Activated naive CD4-positive, alpha-beta T cell treated with anti-CD3 and anti-CD28 coated beads for 36 hours (primary cell): ENCODE measurements at regions of chr19 and their contacts with region 1.

Region 1: DNA sequence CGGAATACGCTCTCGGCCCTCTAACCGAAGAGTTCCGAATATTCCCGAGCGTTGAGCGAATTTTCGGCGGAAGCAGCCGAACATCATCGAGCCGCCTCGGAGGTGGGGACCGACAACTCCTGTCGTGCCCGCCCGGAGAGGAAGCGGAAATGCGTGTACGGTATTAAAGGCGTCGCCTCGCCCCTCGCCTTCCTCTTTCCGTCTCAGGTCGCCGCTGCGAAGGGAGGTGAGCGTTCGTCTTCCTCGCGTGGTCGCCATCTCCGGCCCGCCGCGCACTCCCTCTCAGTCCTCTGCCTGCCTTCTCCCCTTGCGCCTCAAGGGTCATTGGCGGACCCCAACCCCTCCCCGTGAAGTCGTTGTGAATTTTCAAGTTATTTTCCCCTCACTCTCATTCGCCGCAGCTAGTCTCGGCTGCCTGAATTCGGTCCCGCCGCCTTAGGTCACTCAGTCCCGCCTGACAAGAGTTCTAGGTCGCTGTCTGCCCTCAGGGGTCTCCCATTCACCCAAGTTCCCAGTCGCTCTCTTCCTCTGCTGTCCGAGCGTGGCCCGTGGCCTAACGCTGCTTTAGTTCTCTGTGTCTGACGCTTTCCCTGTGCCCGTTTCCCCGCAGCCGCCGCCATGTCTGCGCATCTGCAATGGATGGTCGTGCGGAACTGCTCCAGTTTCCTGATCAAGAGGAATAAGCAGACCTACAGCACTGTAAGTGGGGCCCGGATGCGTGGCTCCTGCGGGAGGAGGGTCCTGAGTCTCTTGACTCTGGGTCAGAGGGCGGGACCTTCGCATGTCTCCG is at the start of gene RPL28:
- DNase-seq: peak; percentile 99
- H3K4me3 Mint-ChIP-seq: peak within 1 kb of the TSS; percentile 100
- H3K27ac Mint-ChIP-seq: peak within 1 kb of the TSS; percentile 97
- H3K4me1 Mint-ChIP-seq: peaks cover 59% of the 10 kb centered on the region
- H3K27me3 Mint-ChIP-seq: no peaks in the 10 kb centered on the region
- total RNA-seq, gene RPL28: 3,327 to 3,354 TPM

Region 2: DNA sequence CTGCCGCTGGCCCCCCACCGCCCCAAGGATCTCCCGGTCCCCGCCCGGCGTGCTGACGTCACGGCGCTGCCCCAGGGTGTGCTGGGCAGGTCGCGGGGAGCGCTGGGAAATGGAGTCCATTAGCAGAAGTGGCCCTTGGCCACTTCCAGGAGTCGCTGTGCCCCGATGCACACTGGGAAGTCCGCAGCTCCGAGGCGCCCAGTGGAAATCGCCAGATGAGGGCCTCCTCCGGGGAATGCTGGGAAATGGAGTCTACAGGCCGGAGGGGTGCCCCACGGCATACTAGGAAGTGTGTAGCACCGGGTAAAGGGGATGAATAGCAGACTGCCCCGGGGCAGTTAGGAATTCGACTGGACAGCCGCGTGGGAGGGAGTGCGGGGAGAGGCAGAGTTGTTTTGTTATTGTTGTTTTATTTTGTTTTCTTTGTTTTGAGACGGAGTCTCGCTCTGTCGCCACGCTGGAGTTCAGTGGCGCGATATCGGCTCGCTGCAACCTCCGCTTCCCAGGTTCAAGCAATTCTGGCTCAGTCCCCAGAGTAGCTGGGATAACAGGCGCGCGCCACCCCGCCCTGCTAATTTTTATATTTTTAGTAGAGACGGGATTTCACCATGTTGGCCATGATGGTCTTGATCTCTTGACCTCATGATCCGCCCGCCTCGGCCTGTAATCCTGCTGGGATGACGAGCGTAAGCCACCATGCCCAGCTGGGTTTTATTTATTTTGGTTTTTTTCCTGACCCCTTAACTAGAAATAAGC is 268.1 kb before region 1 on chr19 and contains the start of gene PPP1R12C:
- CTCF ChIA-PET with region 1: interaction called, 3 read pairs
- intact Hi-C with region 1: loop called (anchors 1 kb)
- DNase-seq: peak; percentile 99
- H3K4me3 Mint-ChIP-seq: peak within 1 kb of the TSS; percentile 98
- H3K27ac Mint-ChIP-seq: peak within 1 kb of the TSS; percentile 90
- H3K4me1 Mint-ChIP-seq: peaks cover 23% of the 10 kb centered on the region
- H3K27me3 Mint-ChIP-seq: peaks cover 2% of the 10 kb centered on the region
- total RNA-seq, gene PPP1R12C: 41.2 to 42.1 TPM

Region 3: DNA sequence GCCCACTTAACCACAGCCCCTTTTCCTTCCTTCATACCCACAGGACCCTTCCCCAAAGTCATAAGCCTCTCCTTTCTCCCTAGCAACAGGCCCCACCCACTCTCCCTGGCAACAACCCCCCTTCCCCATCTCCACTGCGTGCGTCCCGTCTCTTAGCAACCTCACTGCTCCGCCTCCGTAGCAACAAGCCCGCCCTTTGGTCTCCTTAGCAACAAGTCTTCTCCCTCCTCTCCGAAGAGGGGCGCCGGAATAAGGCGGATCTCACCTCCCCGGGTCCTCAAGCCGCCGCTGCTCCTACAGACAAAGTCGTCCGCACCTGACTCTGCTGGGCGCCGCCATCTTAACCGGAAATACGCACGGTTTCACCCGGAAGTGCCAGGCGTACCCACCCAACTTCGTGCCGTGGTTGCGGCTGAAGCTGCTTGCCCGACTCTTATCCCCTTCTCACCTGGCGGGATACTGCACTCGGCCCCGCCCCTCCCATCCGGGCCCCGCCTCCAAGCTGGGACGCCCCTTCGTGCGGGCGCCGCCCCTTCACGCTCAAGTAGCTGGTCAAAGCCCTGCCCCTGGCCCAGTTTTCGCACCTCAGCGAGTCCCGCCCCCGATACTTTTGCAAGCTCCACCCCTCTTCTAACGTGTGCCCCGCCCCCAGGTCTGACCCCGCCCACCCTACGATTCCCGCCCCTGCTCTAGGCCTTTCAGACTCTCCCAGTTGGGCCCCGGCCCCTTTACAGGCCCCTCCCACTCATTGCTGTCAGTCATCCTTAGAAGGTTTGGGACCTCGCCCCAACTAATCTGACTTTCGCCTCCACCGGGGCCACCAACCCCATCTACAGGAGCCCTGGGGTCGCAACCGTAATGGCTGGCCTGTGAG is 105.9 kb before region 1 on chr19 and contains the start of gene HSPBP1:
- CTCF ChIA-PET with region 1: no interaction called
- intact Hi-C with region 1: loop called (anchors 1 kb)
- DNase-seq: peak; percentile 97
- H3K4me3 Mint-ChIP-seq: peak within 1 kb of the TSS; percentile 100
- H3K27ac Mint-ChIP-seq: peak within 1 kb of the TSS; percentile 93
- H3K4me1 Mint-ChIP-seq: peaks cover 28% of the 10 kb centered on the region
- H3K27me3 Mint-ChIP-seq: no peaks in the 10 kb centered on the region
- total RNA-seq, gene HSPBP1: 44.3 to 45.0 TPM

Region 4: GRCh38 chr19:55301459-55302317 is 84.2 kb before region 1 on chr19:
- CTCF ChIA-PET with region 1: interaction called, 26 read pairs
- intact Hi-C with region 1: loop called (anchors 1 kb)
- DNase-seq: peak; percentile 96
- H3K4me3 Mint-ChIP-seq: peak overlapping the region; percentile 78
- H3K27ac Mint-ChIP-seq: peak overlapping the region; percentile 86
- H3K4me1 Mint-ChIP-seq: peaks cover 7% of the 10 kb centered on the region
- H3K27me3 Mint-ChIP-seq: no peaks in the 10 kb centered on the region

Region 5: GRCh38 chr19:55407800-55408532 is 22.0 kb after region 1 on chr19:
- CTCF ChIA-PET with region 1: interaction called, 6 read pairs
- intact Hi-C with region 1: loop called (anchors 1 kb)
- DNase-seq: peak; percentile 98
- H3K4me3 Mint-ChIP-seq: peak overlapping the region; percentile 93
- H3K27ac Mint-ChIP-seq: peak overlapping the region; percentile 96
- H3K4me1 Mint-ChIP-seq: peaks cover 27% of the 10 kb centered on the region
- H3K27me3 Mint-ChIP-seq: no peaks in the 10 kb centered on the region

Region 6: GRCh38 chr19:55599468-55600279 is 213.7 kb after region 1 on chr19 and contains the start of gene FIZ1:
- CTCF ChIA-PET with region 1: no interaction called
- intact Hi-C with region 1: loop called (anchors 1 kb)
- DNase-seq: peak; percentile 98
- H3K4me3 Mint-ChIP-seq: peak within 1 kb of the TSS; percentile 88
- H3K27ac Mint-ChIP-seq: peak within 1 kb of the TSS; percentile 99
- H3K4me1 Mint-ChIP-seq: peaks cover 31% of the 10 kb centered on the region
- H3K27me3 Mint-ChIP-seq: no peaks in the 10 kb centered on the region
- total RNA-seq, gene FIZ1: 12.8 to 14.8 TPM